Posterior cingulate gyrus (tissue), 11 donors: ENCODE measurements at regions of chr4 and their contacts with region 1.

Region 1: DNA sequence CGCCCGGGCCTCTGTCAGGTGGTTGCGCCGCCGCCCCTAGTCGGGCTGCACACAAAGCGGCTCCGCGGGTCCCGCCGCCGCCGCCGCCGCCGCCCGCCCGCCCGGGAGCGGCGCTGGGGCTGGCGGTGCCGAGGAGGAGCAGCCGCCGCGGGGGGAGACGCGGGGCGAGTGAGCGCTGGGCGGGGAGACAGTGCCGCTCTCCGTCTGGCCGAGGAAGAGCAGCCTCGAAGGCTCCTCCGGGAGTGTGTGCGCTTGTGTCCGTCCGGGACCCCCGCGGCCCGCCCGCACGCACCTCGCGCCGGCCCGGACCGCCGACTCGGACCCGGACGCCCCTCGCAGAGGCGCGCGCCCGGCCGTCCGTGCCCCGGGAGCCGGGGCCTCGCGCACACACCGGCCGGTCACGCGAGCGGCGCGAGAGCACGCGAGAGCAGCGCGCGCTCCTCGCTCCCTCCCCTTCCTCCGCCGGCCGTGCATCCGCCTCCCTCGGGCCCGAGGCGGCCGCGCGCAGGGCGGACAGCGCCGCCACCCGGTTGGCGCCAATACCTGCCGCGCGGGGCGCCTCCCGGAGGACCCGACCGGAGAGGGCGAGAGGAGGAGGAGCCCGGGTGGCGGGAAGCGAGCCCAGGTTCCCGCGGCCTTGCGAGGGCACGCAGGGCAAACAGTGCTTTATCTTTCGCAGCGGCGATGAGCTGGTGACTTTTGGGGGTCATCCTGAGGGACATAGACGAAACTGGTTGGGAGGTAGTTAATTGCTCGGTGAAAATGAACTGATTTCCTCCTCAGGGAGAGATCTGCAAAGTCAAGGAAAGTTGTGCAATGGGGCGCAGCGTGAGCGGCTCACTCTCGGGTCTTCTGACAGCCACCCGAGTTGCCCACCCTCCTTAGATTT is at the start of gene PDS5A:
- DNase-seq: peak; percentile 75 to 98 (median 82)

Region 2: DNA sequence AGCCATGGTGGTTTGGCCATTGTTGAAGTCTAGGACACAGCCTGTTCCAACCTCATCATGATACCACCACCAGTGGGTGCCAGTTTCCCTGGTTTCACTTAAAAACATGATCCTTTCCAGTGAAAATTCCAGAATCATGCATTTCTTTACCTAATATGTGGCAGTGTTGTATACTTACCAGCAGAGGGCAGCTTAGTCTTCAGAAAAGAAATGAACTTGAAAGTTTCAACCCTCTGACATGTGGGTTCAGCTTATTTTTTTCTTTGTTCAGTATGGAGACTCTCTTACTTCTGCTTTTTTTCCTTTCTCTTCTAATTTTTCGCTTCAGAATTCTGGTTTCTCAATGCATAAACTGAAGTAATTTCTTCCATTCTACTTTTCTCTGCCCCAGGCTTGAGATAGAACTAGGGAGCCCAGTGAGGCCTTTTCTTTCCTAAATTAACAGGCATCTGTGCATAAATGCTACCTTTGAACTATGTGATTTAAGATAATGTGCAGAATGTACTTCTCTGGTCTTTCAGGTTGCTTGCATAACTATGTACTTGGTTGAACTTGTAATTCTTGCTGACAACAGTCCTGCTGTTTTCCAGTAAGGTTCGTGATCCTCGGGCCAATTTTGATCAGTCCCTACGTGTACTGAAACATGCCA is 508.2 kb before region 1 on chr4:
- intact Hi-C with region 1: loop called (anchors 1 kb)
- DNase-seq: peak in 1 of 10 donors; percentile 16

Region 3: DNA sequence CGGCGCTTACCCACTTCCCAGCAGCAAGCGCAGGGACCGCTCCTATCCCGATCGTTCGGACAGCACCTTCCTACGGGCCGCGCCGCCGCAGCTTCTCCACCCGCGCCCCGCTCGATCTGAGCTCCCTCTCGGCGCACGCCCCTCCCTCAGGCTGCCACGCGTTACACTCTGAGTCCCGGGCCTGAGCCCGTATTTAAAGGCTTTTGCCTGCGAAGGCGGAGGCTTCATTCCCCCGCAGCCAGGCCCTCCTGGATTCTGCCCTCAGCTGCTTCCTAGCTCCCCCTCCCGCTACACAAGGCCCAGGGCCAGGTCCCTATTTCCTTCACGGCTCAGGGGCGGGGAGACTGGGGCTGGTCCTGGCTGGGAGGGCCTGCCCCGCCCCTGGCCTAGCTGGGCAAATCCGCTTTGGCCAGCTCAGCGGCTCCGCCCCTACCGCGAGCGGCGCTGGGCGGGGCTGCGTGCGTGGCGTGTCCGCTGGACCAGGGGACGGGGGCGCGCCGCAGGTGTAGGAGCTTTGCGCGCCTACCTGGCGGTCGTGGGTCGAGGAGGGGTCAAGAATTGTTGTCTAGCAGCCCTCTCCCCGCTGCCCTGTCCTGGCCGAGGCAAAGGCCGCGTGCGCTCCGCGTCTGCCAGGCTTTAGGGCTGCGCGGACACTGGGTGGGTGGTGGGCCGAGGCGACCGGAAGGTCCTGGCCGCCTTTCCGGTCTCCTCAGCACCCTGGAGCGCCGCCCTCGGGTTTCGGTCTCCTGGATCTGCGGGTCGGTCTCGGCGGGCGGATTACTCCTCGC is 450.3 kb before region 1 on chr4 and contains the start of gene UGDH:
- intact Hi-C with region 1: loop called (anchors 2 kb)
- DNase-seq: peak; percentile 91 to 100 (median 97)

Region 4: GRCh38 chr4:39697740-39698423 is 279.9 kb before region 1 on chr4 and contains the start of gene UBE2K:
- intact Hi-C with region 1: loop called (anchors 1 kb)
- DNase-seq: peak; percentile 71 to 97 (median 80)

Region 5: DNA sequence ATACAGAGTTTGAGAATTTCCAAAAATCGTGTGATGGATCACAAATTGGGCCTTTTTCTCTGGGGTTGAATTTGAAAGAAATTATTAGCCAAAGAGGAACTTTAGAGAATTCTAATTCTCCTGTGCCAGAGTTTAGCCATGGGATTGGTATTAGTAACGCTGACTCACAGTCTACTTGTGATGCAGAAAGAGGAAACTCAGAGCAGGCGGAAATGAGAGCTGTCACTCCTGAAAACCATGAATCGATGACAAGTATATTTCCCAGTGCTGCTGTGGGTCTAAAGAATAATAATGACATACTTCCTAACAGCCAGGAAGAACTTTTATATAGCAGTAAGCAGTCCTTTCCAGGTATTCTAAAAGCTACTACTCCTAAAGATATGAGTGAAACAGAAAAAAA is 143.8 kb after region 1 on chr4:
- intact Hi-C with region 1: no loop called
- DNase-seq: no peak

Region 6: GRCh38 chr4:40800064-40800463 is 822.3 kb after region 1 on chr4:
- intact Hi-C with region 1: no loop called
- DNase-seq: no peak